ENCODE measurements at regions of chr3 and their contacts with region 1.

Region 1: DNA sequence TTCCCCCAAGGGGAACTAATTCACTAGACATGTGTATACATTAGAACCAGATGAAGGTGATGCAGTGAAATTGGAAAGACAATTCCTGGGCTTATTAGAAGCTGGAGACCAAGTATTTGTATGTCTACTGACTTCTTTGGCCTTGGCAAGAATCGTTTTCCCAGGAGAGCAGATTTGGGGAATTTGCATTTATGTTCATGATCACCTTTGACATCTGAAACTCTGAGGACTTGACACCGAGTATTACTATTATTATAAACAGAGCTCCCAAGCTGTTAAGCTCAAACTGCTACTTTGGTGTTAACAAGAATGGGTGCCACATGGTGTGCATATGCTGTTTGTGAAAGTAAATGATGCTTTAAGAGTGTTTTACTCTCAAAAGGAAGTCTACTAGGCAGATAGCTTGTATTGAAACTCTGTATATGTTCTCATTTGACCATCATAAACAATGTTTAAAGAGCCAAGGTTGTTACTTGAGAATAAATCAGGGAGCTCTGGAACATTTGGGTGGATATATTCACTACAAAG is 519.8 kb upstream of the GOLIM4 start:
- DNase-seq: no peak

Region 2: DNA sequence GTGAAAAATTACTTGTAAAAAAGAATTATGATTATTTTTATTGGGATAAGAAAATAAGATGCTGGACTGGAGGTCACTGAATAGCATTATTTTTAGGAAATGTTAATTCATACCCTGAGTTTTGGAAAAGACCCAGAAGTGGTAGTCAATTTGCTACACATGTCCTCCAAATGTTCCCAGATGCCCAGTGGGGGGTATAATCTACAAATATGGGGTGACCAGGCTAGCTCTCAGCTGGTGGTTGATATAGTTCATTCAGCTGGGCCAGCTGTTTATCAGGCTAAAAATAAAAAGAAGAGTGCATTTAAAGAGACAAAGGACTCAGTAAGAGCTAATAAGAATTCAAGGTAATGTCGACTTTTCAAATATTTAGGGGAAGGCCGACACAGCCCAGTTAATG is 117.8 kb before region 1 on chr3:
- intact Hi-C with region 1: no loop called
- DNase-seq: no peak

Region 3: DNA sequence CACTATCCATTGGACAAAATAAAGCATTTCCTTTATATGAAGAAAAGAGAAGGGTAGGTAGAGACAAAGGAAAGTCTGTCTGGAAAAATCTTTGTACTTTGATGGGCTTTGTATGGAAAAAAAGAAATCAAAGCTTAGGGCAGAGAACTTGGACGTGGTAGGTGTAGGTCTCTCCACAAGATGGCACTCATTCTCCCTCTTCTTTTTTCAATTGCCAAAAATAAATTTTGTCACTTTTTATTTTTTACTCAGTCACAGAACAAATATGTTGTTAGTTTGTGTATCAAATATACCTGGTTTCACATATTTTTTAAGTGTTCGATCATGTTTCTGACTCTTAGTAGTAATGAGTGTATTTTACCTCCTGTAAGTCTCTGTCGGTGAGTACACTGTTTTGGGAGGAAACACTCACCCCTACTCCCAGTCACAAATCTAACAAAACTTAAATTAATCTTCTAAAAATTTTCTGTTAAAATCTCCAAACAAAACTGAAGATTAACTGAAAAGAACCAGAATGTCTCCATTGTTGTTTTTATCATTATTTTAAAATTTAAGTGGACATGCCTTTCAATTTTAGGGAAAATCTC is 104.0 kb before region 1 on chr3:
- intact Hi-C with region 1: loop called (anchors 10 kb)
- DNase-seq: peak in 3 of 42 donors; percentile 7 to 54 (median 26)

Region 4: DNA sequence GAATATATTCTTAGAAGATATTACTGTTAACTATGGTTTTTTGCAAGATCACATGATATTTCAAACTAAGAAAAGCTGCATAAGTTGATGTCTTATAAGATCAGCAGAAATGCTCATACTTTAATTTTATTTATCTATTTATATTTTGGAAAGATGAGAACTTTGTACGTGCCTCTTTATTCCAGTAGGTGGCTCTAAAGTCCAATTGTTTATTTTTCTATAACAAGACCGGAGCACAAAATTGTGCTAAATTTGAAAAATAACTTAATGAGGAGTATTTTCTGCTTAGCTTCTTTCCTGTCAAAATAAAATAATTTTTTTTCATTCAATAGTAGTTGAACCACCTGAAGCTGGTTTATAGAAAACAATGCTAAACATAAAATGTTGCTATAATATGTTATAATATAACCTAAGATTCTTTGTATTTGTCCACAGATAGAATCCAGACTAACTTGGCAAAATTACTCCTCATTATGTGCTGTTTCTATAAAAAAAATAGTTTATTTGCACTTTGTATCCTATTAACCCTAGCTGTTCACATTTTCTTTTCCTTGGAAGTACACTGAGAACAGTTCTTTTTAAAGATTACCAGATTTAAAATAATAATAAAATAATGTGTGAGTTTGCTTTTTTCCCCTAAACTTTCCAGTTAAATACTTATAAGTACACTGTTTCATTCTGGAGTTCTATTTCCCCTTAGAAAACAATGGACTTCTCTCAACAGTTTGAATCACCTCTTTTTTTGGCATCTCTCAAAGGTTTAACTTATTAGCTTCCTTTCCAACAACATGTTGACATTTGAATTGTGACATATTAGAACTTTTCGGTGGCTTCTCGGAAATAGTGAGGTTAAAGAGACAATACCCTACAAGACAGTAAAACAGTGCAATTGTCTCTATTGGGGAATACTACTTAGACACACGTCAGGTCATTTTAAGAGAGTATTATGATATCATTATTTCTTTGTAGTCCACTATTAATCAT is 517.9 kb after region 1 on chr3:
- intact Hi-C with region 1: no loop called
- DNase-seq: no peak